Heart left ventricle (tissue), 16 donors: ENCODE measurements at regions of chr2 and their contacts with region 1.

Region 1: DNA sequence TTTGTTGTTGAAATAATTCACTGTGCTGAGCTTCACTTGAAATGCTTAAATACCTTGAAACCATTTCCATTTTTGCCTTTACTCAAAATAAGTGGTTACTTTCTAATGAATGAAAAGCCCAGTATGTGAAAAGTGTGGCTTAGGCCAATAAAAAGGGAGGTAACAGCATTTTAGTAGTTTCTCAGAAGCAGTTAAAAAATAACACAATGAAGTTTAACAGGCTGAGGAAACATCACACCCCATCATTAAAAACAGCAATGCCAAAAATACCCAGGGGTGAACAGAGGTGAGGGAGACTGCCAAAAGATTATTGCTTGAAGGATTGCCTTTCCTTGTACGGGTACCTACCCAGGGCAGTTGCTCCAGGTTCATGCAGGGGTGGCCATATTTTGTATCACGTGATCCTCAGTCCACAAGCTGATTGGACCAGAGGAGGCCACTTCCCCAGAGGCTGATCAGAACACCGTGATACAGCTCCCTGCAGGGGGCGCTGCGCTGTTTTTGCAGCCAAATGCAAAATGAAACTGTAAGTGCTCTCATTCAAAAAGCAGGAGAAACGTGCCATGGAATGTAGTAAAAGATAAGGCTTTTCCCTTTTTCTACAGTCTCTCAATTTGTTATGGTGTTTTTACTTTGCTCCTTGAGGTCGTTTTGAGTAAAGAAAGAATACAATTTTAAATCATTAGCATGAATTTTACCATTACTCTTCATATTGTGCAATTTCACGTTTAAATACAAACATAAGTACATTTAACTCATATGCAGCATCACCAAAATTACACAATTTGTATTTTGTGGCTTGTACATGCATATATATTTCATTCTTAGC is 70.2 kb upstream of the SH3BP4 start:
- DNase-seq: peak; percentile 78 to 91 (median 85)
- ATAC-seq: peak; percentile 92 to 98 (median 96)
- H3K4me3 ChIP-seq: peak overlapping the region in 7 of 12 donors; percentile 13 to 38 (median 26)
- H3K27ac ChIP-seq: peak overlapping the region in 3 of 12 donors; percentile 2 to 40 (median 23)
- H3K4me1 ChIP-seq: peaks cover 0 to 25% (median 8%) of the 10 kb centered on the region in 12 donors
- H3K27me3 ChIP-seq: no peaks in the 10 kb centered on the region
- CTCF ChIP-seq: peak; percentile 67 to 93 (median 78)
- POLR2A ChIP-seq: no peak

Region 2: GRCh38 chr2:234550511-234551107 is 331.0 kb before region 1 on chr2:
- intact Hi-C with region 1: loop called in 2 of 10 experiments (anchors 10 kb)
- DNase-seq: peak in 4 of 5 donors; percentile 52 to 59 (median 54)
- ATAC-seq: peak; percentile 75 to 83 (median 79)
- H3K4me3 ChIP-seq: no peak overlapping the region
- H3K27ac ChIP-seq: no peak overlapping the region
- H3K4me1 ChIP-seq: peaks cover 0 to 3% (median 0%) of the 10 kb centered on the region in 12 donors
- H3K27me3 ChIP-seq: peaks cover 0 to 20% (median 0%) of the 10 kb centered on the region in 9 donors
- CTCF ChIP-seq: peak; percentile 90 to 99 (median 94)
- POLR2A ChIP-seq: no peak

Region 3: DNA sequence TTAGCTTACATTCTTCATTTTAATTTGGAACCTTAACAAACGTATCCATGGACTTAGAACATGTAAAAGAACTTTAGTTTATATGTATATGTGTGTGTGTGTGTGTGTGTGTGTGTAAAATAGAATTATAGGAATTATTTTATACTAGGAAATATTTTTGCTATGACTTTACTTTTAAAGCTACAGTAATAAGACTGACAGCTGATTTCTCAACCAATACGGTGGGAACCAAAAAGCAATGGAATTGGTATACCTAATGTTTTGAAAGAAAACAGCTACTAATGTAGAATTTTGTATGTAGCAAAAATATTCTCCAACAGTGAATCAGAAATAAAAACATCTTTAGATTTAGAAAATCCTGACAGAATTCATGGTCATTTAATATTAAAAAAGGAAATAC is 238.2 kb before region 1 on chr2:
- intact Hi-C with region 1: no loop called
- DNase-seq: no peak
- ATAC-seq: no peak
- H3K4me3 ChIP-seq: no peak overlapping the region
- H3K27ac ChIP-seq: no peak overlapping the region
- H3K4me1 ChIP-seq: no peaks in the 10 kb centered on the region
- H3K27me3 ChIP-seq: no peaks in the 10 kb centered on the region
- CTCF ChIP-seq: no peak
- POLR2A ChIP-seq: no peak

Region 4: DNA sequence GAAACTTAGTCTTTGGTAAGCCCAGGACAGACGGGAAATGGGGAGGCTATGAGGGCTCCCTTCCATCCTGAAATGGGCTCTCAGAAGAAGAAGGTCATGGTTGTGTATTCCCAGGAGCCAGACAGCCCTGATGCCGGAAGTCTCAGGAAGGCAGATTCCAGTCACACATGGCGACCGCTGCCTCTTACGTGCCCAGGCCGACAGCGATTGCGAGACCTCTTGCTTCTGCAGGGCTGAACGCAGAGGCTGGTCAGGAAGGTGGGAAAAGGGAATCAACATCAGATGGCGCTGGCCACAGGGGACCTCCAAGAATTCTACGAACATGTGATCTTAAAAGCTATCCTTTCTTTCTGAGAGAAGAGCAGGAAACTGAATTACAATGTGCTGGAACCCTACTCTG is 47.4 kb after region 1 on chr2:
- intact Hi-C with region 1: no loop called
- DNase-seq: no peak
- ATAC-seq: no peak
- H3K4me3 ChIP-seq: no peak overlapping the region
- H3K27ac ChIP-seq: no peak overlapping the region
- H3K4me1 ChIP-seq: no peaks in the 10 kb centered on the region
- H3K27me3 ChIP-seq: no peaks in the 10 kb centered on the region
- CTCF ChIP-seq: no peak
- POLR2A ChIP-seq: no peak

Region 5: DNA sequence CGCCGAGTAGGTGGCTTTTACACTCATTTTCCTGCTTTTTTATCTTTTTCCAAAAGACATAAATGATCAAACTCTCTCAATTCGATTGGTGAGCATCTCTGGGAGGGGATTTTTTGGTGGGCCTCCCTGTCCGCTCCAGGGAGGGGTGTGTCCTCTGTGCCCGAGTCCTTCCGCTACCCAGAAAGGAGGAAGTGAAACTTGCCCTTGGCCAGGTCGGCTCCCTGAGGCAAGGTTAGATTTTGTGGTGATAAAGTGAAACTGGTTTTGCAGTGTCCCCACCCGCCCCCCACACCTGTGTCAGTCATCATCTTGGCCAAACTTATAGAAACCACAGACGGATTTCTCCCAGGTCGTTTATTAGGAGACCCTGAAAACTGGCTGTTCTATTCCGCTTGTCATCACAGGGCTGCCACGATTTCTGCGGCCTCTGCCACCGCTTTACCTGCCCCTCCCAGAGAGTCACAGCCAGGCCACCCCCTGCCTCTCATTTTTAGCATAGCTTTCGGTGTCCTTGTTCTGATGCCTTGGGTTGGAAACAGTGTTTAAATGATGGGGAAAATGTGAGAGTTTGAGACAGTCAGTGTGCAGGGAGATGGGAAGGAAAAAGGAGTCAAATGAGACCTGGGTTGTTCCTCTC is 163.8 kb after region 1 on chr2:
- intact Hi-C with region 1: loop called in 3 of 10 experiments (anchors 5 kb)
- DNase-seq: no peak
- ATAC-seq: no peak
- H3K4me3 ChIP-seq: no peak overlapping the region
- H3K27ac ChIP-seq: no peak overlapping the region
- H3K4me1 ChIP-seq: peaks cover 0 to 47% (median 16%) of the 10 kb centered on the region in 12 donors
- H3K27me3 ChIP-seq: no peaks in the 10 kb centered on the region
- CTCF ChIP-seq: no peak
- POLR2A ChIP-seq: no peak

Region 6: GRCh38 chr2:235055891-235056516 is 174.4 kb after region 1 on chr2:
- intact Hi-C with region 1: loop called in 3 of 10 experiments (anchors 2 to 5 kb)
- DNase-seq: peak in 1 of 5 donors; percentile 30
- ATAC-seq: peak in 3 of 4 donors; percentile 5 to 39 (median 30)
- H3K4me3 ChIP-seq: no peak overlapping the region
- H3K27ac ChIP-seq: no peak overlapping the region
- H3K4me1 ChIP-seq: peaks cover 2 to 21% (median 9%) of the 10 kb centered on the region in 12 donors
- H3K27me3 ChIP-seq: no peaks in the 10 kb centered on the region
- CTCF ChIP-seq: peak; percentile 43 to 62 (median 52)
- POLR2A ChIP-seq: no peak

Region 7: GRCh38 chr2:235106874-235107639 is 225.4 kb after region 1 on chr2:
- intact Hi-C with region 1: loop called in 8 of 10 experiments (anchors 2 to 10 kb)
- DNase-seq: peak; percentile 54 to 71 (median 67)
- ATAC-seq: peak; percentile 55 to 87 (median 74)
- H3K4me3 ChIP-seq: no peak overlapping the region
- H3K27ac ChIP-seq: no peak overlapping the region
- H3K4me1 ChIP-seq: peaks cover 0 to 13% (median 2%) of the 10 kb centered on the region in 12 donors
- H3K27me3 ChIP-seq: no peaks in the 10 kb centered on the region
- CTCF ChIP-seq: peak; percentile 41 to 84 (median 74)
- POLR2A ChIP-seq: no peak